Activated CD8-positive, alpha-beta T cell treated with anti-CD3 and anti-CD28 coated beads for 36 hours (primary cell): ENCODE measurements at regions of chr2 and their contacts with region 1.

Region 1: DNA sequence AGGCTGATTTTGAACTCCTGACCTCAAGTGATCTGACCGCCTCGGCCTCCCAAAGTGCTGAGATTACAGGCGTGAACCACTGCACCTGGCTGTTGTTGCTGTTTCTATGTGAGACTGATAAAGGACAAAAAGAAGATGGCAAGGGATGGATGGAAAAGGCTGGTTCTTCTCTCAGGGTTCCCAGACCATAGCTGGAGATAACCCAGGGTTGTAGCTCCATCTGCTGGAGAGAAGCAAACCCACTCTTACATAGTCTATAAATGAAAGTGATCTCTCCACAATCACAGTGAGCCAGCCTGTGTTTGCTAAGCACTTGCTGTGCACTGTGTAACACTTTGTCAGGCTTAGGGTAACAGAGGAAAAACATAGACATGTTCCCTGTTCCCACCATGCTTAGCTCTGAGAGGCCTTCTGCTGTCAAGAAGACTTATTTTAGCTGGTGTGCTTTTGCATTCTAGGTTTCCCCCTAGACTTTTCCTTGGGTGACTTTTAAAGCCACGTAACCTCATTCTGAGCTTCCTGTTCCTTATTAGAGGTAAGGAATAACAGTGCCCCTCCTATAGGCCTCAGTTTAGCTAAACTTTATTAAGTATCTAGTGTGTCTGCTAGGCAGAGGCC is 49.7 kb downstream of the LIMS1 start:
- DNase-seq: peak; percentile 75
- ATAC-seq: peak; percentile 91
- H3K4me3 Mint-ChIP-seq: no peak overlapping the region
- H3K27ac Mint-ChIP-seq: no peak overlapping the region
- H3K4me1 Mint-ChIP-seq: peaks cover 36% of the 10 kb centered on the region
- H3K27me3 Mint-ChIP-seq: no peaks in the 10 kb centered on the region
- CTCF ChIP-seq: peak; percentile 79

Region 2: DNA sequence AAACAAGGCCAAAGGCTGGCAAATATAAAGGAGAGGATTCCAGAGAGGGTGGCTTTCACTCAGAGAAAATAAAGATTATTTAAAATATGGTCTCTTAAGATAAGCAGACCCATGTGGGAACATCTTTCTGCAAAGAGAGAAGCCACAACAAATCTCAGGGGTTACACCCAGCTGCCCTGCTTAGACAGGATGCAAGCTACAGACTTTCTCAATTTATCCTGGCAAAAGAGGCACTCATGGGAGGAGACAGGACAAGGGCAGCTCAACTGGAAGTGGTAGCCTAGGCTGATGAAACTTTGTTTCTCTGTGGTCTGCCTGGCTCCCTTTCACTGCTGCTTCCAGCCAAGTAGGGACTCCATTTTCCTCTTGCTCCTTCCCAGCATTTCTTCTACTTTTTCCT is 232.1 kb before region 1 on chr2:
- CTCF ChIA-PET with region 1: interaction called, 6 read pairs
- POLR2A ChIA-PET with region 1: no interaction called
- intact Hi-C with region 1: loop called (anchors 5 kb)
- DNase-seq: no peak
- ATAC-seq: no peak
- H3K4me3 Mint-ChIP-seq: no peak overlapping the region
- H3K27ac Mint-ChIP-seq: no peak overlapping the region
- H3K4me1 Mint-ChIP-seq: no peaks in the 10 kb centered on the region
- H3K27me3 Mint-ChIP-seq: peaks cover 4% of the 10 kb centered on the region
- CTCF ChIP-seq: no peak

Region 3: GRCh38 chr2:108533832-108534583 is 50.0 kb before region 1 on chr2 and contains the start of gene LIMS1:
- CTCF ChIA-PET with region 1: interaction called, 14 read pairs
- POLR2A ChIA-PET with region 1: interaction called, 8 read pairs
- intact Hi-C with region 1: loop called (anchors 10 kb)
- DNase-seq: peak; percentile 90
- ATAC-seq: peak; percentile 94
- H3K4me3 Mint-ChIP-seq: peak within 1 kb of the TSS; percentile 96
- H3K27ac Mint-ChIP-seq: peak within 1 kb of the TSS; percentile 95
- H3K4me1 Mint-ChIP-seq: peaks cover 44% of the 10 kb centered on the region
- H3K27me3 Mint-ChIP-seq: no peaks in the 10 kb centered on the region
- CTCF ChIP-seq: no peak
- total RNA-seq, gene LIMS1: 48.1 to 51.7 TPM

Region 4: DNA sequence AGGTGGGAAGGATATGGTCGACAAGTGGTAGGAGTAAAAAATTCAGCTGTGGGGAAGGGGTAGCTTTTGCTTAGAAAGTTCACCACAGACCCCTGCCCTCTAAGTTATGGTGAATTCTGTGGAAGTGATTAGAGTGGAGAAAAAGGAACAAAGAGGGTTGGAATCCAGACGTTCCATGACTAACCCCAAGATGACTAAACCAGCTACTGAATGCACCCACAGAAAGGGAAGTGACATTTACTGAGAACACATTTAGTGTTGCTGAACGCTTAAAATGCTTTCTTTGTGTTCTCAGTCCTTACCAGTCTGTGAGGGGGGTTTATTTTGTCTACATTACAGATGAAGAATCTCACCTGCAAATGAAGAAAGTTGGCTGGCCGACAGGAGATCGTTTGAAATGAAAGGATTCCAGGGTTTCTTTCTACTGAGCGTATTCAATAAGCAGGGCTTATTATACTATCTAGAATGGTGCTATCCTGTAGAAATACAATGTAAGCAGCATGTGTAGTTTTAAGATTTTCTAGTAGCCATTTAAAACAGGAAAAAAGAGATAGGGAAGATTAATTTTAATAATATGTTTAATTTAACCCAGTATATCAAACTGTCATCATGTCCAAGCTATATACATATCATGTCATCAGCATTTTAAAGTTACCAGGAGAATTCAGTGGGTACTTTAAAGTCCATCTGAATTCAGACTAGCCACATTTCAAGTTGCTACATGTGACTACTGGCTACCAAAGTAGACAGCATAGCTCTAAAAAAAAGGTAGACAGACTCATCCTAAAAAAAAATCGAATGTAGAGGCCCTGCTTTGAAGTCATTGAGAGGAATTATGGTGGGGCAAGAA is 10.3 kb after region 1 on chr2:
- CTCF ChIA-PET with region 1: interaction called, 29 read pairs
- POLR2A ChIA-PET with region 1: interaction called, 3 read pairs
- intact Hi-C with region 1: no loop called
- DNase-seq: peak; percentile 43
- ATAC-seq: peak; percentile 67
- H3K4me3 Mint-ChIP-seq: peak overlapping the region; percentile 57
- H3K27ac Mint-ChIP-seq: peak overlapping the region; percentile 84
- H3K4me1 Mint-ChIP-seq: peaks cover 57% of the 10 kb centered on the region
- H3K27me3 Mint-ChIP-seq: no peaks in the 10 kb centered on the region
- CTCF ChIP-seq: peak; percentile 20

Region 5: DNA sequence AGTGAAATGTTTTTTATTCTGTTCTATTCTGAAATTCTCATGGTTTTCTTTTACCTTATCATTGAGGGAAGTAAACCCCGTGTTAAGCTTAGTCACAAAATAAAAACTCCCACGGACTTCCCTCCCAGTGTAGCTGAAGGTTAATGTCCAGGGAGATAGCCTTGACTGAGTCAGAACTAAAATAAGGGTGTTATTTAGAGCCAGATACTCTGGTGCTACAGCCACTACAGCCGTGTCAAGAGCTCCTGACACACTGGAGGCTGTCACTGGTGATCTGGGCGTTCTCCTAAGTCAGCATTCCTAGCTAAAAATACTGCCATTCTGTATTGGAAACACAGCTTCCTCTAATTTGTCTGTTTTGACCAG is 53.3 kb after region 1 on chr2:
- CTCF ChIA-PET with region 1: interaction called, 30 read pairs
- POLR2A ChIA-PET with region 1: interaction called, 3 read pairs
- intact Hi-C with region 1: no loop called
- DNase-seq: no peak
- ATAC-seq: no peak
- H3K4me3 Mint-ChIP-seq: no peak overlapping the region
- H3K27ac Mint-ChIP-seq: peak overlapping the region; percentile 34
- H3K4me1 Mint-ChIP-seq: peaks cover 53% of the 10 kb centered on the region
- H3K27me3 Mint-ChIP-seq: no peaks in the 10 kb centered on the region
- CTCF ChIP-seq: no peak